ENCODE measurements at regions of chr2 and their contacts with region 1.

Region 1: GRCh38 chr2:161223139-161223732 is 63.0 kb downstream of the TANK start:
- DNase-seq: no peak
- H3K4me3 ChIP-seq: no peak overlapping the region
- H3K27ac ChIP-seq: no peak overlapping the region
- H3K4me1 ChIP-seq: no peaks in the 10 kb centered on the region
- H3K27me3 ChIP-seq: no peaks in the 10 kb centered on the region
- CTCF ChIP-seq: peak; percentile 80

Region 2: DNA sequence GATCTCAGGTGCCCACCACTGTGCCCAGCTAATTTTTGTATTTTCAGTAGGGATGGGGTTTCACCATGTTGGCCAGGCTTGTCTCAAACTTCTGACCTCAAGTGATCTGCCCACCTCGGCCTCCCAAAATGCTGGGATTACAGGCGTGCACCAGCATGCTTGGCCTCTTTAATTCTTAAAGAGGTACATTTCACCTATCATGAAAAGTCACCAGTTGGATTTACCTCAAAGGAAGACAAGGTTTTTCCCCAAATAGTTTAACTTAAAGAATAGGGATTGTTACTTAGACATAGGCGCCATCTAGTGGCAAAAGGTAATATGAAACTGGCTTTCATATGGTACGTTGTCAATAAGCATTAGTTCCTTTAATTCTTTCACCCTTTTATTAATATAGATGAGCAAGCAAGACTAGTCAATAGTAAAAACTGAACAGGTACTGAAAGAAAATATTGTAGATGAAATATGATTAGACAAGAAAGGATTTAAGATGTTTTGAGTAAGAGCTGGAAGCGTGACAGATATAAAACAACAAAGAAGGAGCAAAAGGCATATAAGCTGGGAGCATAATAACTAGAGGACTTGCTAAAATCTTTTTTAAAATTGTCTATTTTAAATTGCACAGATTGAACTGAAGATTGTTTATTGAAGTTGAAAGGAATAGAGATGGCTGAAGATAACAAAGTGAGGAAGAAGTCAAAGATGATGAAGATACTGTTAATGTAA is 50.0 kb after region 1 on chr2:
- intact Hi-C with region 1: loop called (anchors 10 kb)
- DNase-seq: no peak
- H3K4me3 ChIP-seq: no peak overlapping the region
- H3K27ac ChIP-seq: no peak overlapping the region
- H3K4me1 ChIP-seq: no peaks in the 10 kb centered on the region
- H3K27me3 ChIP-seq: no peaks in the 10 kb centered on the region
- CTCF ChIP-seq: peak; percentile 82

Region 3: DNA sequence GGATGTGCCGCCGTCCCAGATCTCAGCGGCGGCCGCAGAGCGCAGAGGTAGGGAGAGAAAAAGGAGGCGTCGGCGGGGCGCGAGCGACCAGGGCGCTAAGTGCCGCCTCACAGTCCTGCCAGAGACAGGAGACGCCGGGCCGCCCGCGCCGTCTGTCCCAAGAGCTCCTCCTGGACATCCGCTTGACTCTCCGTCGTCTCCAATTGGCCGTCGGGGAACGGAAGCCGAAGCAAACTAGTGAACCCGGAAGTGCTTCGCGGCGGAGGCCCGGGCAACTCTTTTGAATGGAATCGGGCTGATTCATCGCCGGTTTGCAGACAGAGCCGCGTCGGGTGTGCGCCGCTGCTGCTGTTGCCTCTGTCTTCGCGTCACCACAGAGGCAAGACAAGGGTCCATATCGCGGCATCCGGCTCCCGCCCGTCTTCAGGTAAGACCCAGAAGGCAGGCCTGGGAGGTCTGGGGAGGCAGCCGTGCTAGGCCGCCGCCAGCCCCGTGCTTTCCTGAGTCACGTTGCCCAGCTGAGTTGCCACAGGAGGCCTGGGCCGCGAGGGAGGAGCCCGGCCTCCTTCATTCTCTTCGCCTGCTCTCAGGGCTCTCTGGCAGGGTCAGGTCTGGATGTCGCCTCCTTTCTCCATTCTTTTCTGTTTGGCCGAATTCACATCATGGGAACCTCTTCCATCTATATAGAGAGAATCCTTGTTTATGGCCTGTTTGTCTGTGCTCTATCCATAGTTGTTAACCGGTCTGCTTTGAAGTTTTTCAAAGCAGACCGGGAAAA is 85.1 kb after region 1 on chr2 and contains the start of gene PSMD14:
- intact Hi-C with region 1: no loop called
- DNase-seq: peak; percentile 91
- H3K4me3 ChIP-seq: peak within 1 kb of the TSS; percentile 85
- H3K27ac ChIP-seq: peak within 1 kb of the TSS; percentile 82
- H3K4me1 ChIP-seq: peaks cover 26% of the 10 kb centered on the region
- H3K27me3 ChIP-seq: no peaks in the 10 kb centered on the region
- CTCF ChIP-seq: no peak
- total RNA-seq, gene PSMD14: 42.3 TPM